Psoas muscle (tissue), 8 donors: ENCODE measurements at regions of chr9 and their contacts with region 1.

Region 1: GRCh38 chr9:130866474-130866965 is 30.1 kb downstream of the QRFP start:
- DNase-seq: peak; percentile 59 to 72
- ATAC-seq: peak; percentile 71 to 85 (median 78)
- H3K4me3 ChIP-seq: no peak overlapping the region
- H3K27ac ChIP-seq: no peak overlapping the region
- H3K4me1 ChIP-seq: peaks cover 29% of the 10 kb centered on the region
- H3K27me3 ChIP-seq: no peaks in the 10 kb centered on the region
- CTCF ChIP-seq: peak; percentile 67

Region 2: GRCh38 chr9:130610862-130611707 is 255.4 kb before region 1 on chr9:
- intact Hi-C with region 1: loop called in 1 of 2 experiments (anchors 10 kb)
- DNase-seq: no peak
- ATAC-seq: no peak
- H3K4me3 ChIP-seq: no peak overlapping the region
- H3K27ac ChIP-seq: no peak overlapping the region
- H3K4me1 ChIP-seq: peaks cover 8% of the 10 kb centered on the region
- H3K27me3 ChIP-seq: no peaks in the 10 kb centered on the region
- CTCF ChIP-seq: no peak

Region 3: DNA sequence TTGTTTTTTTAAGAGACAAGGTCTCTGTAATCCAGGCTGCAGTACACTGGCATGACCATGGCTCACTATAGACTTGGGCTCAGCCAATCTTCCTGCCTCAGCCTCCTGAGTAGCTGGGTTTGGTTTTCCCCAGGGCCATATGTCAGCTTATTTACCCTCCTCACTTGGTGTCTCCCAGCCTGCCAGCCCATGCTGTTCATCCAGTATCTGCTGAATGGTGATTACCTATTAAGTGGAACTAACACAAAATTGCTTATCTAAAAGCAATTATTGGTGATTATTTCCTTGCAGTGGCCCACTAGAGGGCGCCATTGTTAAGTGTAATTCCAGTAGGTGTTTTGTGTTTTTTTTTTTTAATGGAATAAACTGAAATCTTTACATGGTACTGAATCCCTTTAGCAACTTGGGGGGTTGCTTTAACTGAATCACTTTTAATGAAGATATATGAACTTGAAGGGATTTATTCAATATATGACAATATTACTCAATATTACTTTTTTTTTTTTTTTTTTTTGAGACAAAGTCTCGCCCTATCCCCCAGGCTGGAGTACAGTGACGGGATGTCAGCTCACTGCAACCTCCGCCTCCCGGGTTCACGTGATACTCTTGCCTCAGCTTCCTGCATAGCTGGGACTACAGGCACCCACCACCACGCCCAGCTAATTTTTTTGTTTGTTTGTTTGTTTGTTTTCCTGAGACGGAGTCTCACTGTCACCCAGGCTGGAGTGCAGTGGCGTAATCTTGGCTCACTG is 159.1 kb before region 1 on chr9:
- intact Hi-C with region 1: loop called (anchors 2 to 5 kb)
- DNase-seq: peak; percentile 54 to 61
- ATAC-seq: peak in 3 of 4 donors; percentile 18 to 38 (median 31)
- H3K4me3 ChIP-seq: no peak overlapping the region
- H3K27ac ChIP-seq: no peak overlapping the region
- H3K4me1 ChIP-seq: peaks cover 3% of the 10 kb centered on the region
- H3K27me3 ChIP-seq: no peaks in the 10 kb centered on the region
- CTCF ChIP-seq: peak; percentile 84

Region 4: DNA sequence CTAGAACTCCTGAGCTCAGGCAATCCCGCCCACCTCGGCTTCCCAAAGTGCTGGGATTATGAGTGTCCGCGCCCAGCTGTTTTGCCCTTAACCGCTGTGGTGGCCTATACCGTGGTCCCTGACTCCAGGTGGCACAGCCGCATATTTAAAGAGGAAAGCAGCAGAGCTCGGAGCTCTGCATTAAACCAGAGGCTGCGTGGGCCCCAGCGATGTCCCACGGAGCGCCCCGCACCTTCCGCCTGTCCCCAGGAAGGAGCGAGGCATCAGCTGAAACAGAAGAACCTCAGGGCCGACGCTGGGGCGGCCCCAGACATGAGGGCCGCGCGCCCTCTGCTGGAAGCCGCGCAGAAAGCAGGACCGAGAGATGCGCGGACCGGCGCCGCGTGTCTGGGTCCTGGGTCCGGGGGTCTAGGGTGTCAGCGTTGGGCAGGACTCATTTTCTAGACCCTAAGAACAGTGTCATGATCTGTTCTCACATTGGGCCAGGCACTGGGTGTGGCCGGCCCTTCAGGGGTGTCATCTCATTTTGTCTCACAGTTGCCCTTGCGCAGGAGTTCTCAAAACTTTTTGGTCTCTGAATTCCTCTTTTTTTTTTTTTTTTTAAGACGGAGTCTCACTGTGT is 180.2 kb after region 1 on chr9:
- intact Hi-C with region 1: loop called in 1 of 2 experiments (anchors 2 kb)
- DNase-seq: peak; percentile 67 to 78
- ATAC-seq: peak; percentile 79 to 89 (median 84)
- H3K4me3 ChIP-seq: no peak overlapping the region
- H3K27ac ChIP-seq: no peak overlapping the region
- H3K4me1 ChIP-seq: no peaks in the 10 kb centered on the region
- H3K27me3 ChIP-seq: peaks cover 0 to 4% (median 0%) of the 10 kb centered on the region in 3 donors
- CTCF ChIP-seq: peak; percentile 90

Region 5: DNA sequence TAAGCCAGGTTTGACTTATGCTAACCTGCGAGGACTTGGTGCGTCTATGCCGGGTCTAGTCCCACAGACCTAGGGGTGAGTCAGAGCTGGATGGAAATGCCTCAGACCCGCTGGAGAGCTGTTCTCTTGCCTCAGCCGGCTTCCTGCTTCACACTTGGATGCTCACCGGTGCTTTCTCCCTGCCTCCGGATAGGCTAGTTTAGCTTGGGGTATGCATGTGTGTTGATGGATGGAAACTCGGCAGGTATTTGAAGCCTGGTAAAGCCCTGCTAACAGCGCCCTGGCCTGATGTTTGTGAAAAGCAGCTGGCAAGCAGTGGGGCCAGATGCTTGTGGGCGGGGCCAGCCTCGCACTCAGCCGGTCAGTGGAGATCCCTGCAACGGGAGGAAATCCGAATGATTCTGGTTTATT is 556.7 kb after region 1 on chr9:
- intact Hi-C with region 1: no loop called
- DNase-seq: peak; percentile 51 to 72
- ATAC-seq: peak; percentile 75 to 80 (median 79)
- H3K4me3 ChIP-seq: peak overlapping the region; percentile 16
- H3K27ac ChIP-seq: peak overlapping the region; percentile 84
- H3K4me1 ChIP-seq: peaks cover 66% of the 10 kb centered on the region
- H3K27me3 ChIP-seq: no peaks in the 10 kb centered on the region
- CTCF ChIP-seq: no peak